Right cardiac atrium (tissue), 5 donors: ENCODE measurements at regions of chr2 and their contacts with region 1.

Region 1: GRCh38 chr2:85551698-85552678 is 9.3 kb downstream of the GGCX start:
- DNase-seq: peak; percentile 71 to 88 (median 87)
- ATAC-seq: peak; percentile 68 to 69
- H3K4me3 ChIP-seq: no peak overlapping the region
- H3K27ac ChIP-seq: no peak overlapping the region
- H3K4me1 ChIP-seq: no peaks in the 10 kb centered on the region
- H3K27me3 ChIP-seq: no peaks in the 10 kb centered on the region

Region 2: GRCh38 chr2:85420536-85421259 is 131.3 kb before region 1 on chr2:
- intact Hi-C with region 1: loop called (anchors 2 kb)
- DNase-seq: peak; percentile 91 to 97 (median 96)
- ATAC-seq: peak; percentile 81 to 84
- H3K4me3 ChIP-seq: no peak overlapping the region
- H3K27ac ChIP-seq: peak overlapping the region; percentile 46
- H3K4me1 ChIP-seq: no peaks in the 10 kb centered on the region
- H3K27me3 ChIP-seq: no peaks in the 10 kb centered on the region